Esophagus muscularis mucosa (tissue), 4 donors: ENCODE measurements at regions of chr9 and their contacts with region 1.

Region 1: GRCh38 chr9:130682490-130683121 is 11.0 kb upstream of the EXOSC2 start:
- DNase-seq: no peak
- H3K4me3 ChIP-seq: peak overlapping the region; percentile 65 to 69 (median 67)
- H3K27ac ChIP-seq: no peak overlapping the region
- H3K4me1 ChIP-seq: peaks cover 13 to 17% (median 17%) of the 10 kb centered on the region in 4 donors
- H3K27me3 ChIP-seq: peaks cover 0 to 20% (median 0%) of the 10 kb centered on the region in 4 donors
- CTCF ChIP-seq: peak; percentile 80 to 90 (median 83)
- EP300 ChIP-seq: no peak
- POLR2A ChIP-seq: no peak

Region 2: DNA sequence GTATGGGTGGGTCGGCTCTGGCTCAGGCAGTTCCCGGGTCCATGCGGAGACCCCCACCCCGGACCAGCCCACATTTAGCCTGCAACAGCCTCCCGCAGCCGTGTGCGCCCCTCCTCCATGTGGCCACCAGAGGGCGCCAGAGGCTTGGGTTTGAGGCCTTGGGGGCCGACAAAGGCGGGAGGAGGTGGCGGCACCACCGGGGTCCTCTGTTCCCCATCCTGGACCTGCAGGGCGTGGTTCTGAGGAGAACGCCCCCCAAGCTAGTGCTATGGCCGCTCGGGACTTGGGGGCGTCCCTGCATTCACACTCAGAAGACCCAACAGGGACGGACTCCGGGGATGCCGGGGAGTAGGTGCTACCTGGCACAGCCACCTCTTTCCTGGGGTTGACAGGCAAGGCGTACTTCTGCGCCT is 221.4 kb before region 1 on chr9:
- intact Hi-C with region 1: loop called (anchors 1 kb)
- DNase-seq: no peak
- H3K4me3 ChIP-seq: no peak overlapping the region
- H3K27ac ChIP-seq: no peak overlapping the region
- H3K4me1 ChIP-seq: peaks cover 4 to 15% (median 7%) of the 10 kb centered on the region in 4 donors
- H3K27me3 ChIP-seq: no peaks in the 10 kb centered on the region
- CTCF ChIP-seq: peak; percentile 88 to 93 (median 89)
- EP300 ChIP-seq: no peak
- POLR2A ChIP-seq: no peak

Region 3: DNA sequence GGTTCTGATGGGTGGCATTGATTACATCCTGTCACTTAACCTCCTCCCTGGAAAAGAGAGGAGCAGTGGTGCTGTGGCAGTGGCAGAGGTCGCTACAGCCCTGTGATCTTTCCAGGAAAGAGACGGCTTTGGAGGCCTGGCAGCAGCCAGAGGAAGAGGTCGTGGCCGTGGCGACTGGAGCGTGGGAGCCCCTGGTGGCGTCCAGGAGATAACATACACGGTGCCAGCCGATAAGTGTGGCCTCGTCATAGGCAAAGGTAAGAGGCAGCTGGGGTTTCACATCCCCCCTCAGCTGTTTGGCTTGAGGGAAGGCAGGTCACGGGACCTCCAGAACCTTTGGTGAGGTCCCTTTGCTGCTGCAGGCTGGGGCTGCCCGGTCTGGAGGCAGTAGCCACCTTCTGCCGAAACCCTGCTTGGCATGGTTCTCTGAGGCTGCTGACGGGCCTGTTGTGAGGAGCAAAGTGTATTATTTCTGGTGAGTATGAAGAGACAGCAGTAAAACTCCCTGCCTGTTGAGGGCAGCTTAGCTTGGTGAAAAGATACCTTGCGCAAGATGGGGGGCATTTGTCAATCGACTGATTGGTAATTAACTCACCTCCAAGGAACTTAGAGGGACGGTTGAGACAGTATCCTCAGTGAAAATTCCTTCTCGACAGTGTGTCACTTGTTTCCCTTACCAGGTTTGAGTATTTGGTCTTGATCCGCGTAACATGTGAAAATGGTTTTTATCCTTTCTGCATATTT is 56.2 kb before region 1 on chr9:
- intact Hi-C with region 1: no loop called
- DNase-seq: no peak
- H3K4me3 ChIP-seq: no peak overlapping the region
- H3K27ac ChIP-seq: no peak overlapping the region
- H3K4me1 ChIP-seq: peaks cover 0 to 22% (median 0%) of the 10 kb centered on the region in 4 donors
- H3K27me3 ChIP-seq: no peaks in the 10 kb centered on the region
- CTCF ChIP-seq: no peak
- EP300 ChIP-seq: no peak
- POLR2A ChIP-seq: no peak